ENCODE measurements at regions of chr3 and their contacts with region 1.

Region 1: DNA sequence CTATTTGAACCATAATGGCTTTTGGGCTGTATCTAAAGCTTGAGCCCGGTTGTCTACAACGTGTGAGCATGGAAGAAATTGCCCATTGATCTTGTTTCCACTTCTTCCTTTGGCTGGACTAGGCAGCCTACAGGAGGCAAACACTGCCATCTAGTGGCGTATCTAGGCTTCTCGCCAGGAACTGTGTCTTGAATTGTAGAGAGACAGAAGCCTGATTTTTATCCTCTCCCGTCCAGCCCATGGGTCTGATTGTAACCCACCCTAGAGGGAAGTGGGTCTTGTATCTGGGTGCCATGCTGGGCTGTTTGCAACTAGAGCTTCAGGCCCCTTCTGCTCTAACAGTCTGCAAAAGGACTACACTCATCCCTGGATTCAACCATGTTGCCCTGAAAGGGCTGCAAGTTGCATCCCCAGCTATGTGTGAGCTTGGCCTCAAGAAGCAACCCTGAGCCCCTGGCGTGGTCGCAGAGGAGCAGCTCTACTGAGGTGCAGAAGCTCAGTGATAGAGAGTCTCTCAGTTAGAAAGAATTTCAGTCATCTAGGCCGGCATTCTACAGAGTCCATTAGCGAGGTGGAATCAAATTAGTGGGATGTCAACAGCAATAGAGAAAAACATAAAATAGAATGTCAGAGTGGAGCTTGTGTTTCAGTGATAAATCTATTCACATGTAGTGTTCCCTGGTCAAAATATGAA is 170.2 kb upstream of the UMPS start:
- DNase-seq: no peak
- ATAC-seq: peak; percentile 95
- H3K4me3 ChIP-seq: no peak overlapping the region
- H3K27ac ChIP-seq: no peak overlapping the region
- H3K4me1 ChIP-seq: no peaks in the 10 kb centered on the region
- H3K27me3 ChIP-seq: 0 out of 4 replicates have a peak, but pooled peaks cover 0 to 2% of the 10 kb centered on the region in 2 experiments
- CTCF ChIP-seq: peak; percentile 87 to 90 (median 88)
- EP300 ChIP-seq: no peak
- POLR2A ChIP-seq: no peak
- RAD21 ChIP-seq: peak; percentile 77

Region 2: GRCh38 chr3:124351430-124352148 is 208.4 kb before region 1 on chr3:
- CTCF ChIA-PET with region 1: interaction called, 19 read pairs
- POLR2A ChIA-PET with region 1: no interaction called
- RAD21 ChIA-PET with region 1: no interaction called
- SMC1A ChIA-PET with region 1: interaction called, 4 read pairs
- in situ Hi-C with region 1: no loop called
- intact Hi-C with region 1: no loop called
- DNase-seq: no peak
- ATAC-seq: peak; percentile 45; the same call in 1 of the 3 replicates
- H3K4me3 ChIP-seq: no peak overlapping the region
- H3K27ac ChIP-seq: no peak overlapping the region
- H3K4me1 ChIP-seq: no peaks in the 10 kb centered on the region
- H3K27me3 ChIP-seq: no peaks in the 10 kb centered on the region; a peak in 1 of 4 replicates
- CTCF ChIP-seq: peak; percentile 33 to 57 (median 44); a peak in 5 of 6 replicates
- EP300 ChIP-seq: no peak
- POLR2A ChIP-seq: no peak
- RAD21 ChIP-seq: peak; percentile 87

Region 3: GRCh38 chr3:124451630-124452317 is 108.3 kb before region 1 on chr3:
- CTCF ChIA-PET with region 1: no interaction called
- POLR2A ChIA-PET with region 1: no interaction called
- RAD21 ChIA-PET with region 1: no interaction called
- SMC1A ChIA-PET with region 1: no interaction called
- in situ Hi-C with region 1: no loop called
- intact Hi-C with region 1: no loop called
- DNase-seq: peak; percentile 13
- ATAC-seq: peak; percentile 54
- H3K4me3 ChIP-seq: no peak overlapping the region
- H3K27ac ChIP-seq: no peak overlapping the region
- H3K4me1 ChIP-seq: peaks cover 3% of the 10 kb centered on the region; the same call in 1 of the 2 replicates
- H3K27me3 ChIP-seq: no peaks in the 10 kb centered on the region; a peak in 1 of 4 replicates
- CTCF ChIP-seq: no peak
- EP300 ChIP-seq: peak in 1 of 2 experiments; percentile 16; a peak in 1 of 4 replicates
- POLR2A ChIP-seq: no peak
- RAD21 ChIP-seq: no peak

Region 4: DNA sequence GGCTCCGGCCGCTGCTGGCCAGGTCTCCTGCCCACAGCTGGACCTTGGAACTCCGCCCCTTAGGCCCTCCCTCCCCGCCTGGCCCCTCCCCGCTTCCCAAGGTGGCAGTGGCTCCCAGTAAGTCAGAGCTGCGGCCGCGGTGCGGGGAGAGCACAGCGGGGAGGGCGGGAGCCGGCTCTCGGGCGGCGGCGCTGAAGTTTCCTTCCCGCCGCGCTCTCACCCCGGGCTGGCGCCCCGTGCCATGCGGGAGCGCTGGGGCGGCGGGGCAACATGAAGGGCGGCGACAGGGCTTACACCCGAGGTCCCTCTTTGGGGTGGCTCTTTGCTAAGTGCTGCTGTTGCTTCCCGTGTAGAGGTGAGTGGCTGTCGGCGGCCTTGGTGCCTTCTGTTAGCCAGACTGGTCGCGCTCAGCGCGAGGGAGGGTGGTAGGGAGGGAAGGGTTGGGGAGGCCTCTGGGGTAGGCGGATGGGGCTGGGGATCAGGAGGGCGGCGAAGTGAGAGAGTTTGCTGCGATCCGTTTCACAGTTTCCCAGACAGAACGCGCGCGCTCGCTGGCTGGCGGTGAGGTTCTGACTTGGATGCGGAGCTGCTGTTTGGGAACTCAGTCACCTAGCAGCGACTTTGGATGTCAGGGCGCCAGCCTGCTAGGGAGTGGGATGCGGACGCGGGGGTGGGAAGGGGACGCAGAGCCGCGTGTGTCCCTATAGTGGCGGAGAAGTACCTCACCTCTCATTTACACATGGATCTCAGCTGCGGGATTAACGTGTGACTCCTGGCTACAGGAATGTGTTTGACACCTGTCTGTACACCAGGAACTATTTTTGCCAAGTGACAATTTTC is 24.7 kb after region 1 on chr3:
- CTCF ChIA-PET with region 1: interaction called, 5 read pairs
- POLR2A ChIA-PET with region 1: no interaction called
- RAD21 ChIA-PET with region 1: no interaction called
- SMC1A ChIA-PET with region 1: interaction called, 19 read pairs
- in situ Hi-C with region 1: no loop called
- intact Hi-C with region 1: no loop called
- DNase-seq: no peak
- ATAC-seq: peak; percentile 73
- H3K4me3 ChIP-seq: peak overlapping the region; percentile 61; the same call in 1 of the 2 replicates
- H3K27ac ChIP-seq: no peak overlapping the region
- H3K4me1 ChIP-seq: peaks cover 7% of the 10 kb centered on the region
- H3K27me3 ChIP-seq: peaks cover 3 to 10% of the 10 kb centered on the region in 2 experiments; a peak in 2 of 4 replicates
- CTCF ChIP-seq: no peak
- EP300 ChIP-seq: no peak
- POLR2A ChIP-seq: no peak
- RAD21 ChIP-seq: no peak

Region 5: GRCh38 chr3:124639406-124640237 is 79.6 kb after region 1 on chr3:
- CTCF ChIA-PET with region 1: interaction called, 22 read pairs
- POLR2A ChIA-PET with region 1: no interaction called
- RAD21 ChIA-PET with region 1: interaction called, 11 read pairs
- SMC1A ChIA-PET with region 1: interaction called, 10 read pairs
- in situ Hi-C with region 1: no loop called
- intact Hi-C with region 1: no loop called
- DNase-seq: peak; percentile 77
- ATAC-seq: peak; percentile 81
- H3K4me3 ChIP-seq: no peak overlapping the region; the same call in 1 of the 2 replicates
- H3K27ac ChIP-seq: peak overlapping the region; percentile 40
- H3K4me1 ChIP-seq: peaks cover 23% of the 10 kb centered on the region
- H3K27me3 ChIP-seq: no peaks in the 10 kb centered on the region
- CTCF ChIP-seq: no peak
- EP300 ChIP-seq: peak in 1 of 2 experiments; percentile 47; a peak in 2 of 4 replicates
- POLR2A ChIP-seq: no peak
- RAD21 ChIP-seq: no peak

Region 6: GRCh38 chr3:124676236-124676635 is 116.2 kb after region 1 on chr3:
- CTCF ChIA-PET with region 1: interaction called, 577 read pairs
- POLR2A ChIA-PET with region 1: no interaction called
- RAD21 ChIA-PET with region 1: interaction called, 3 read pairs
- SMC1A ChIA-PET with region 1: interaction called, 13 read pairs
- in situ Hi-C with region 1: no loop called
- intact Hi-C with region 1: no loop called
- DNase-seq: no peak
- ATAC-seq: no peak
- H3K4me3 ChIP-seq: no peak overlapping the region
- H3K27ac ChIP-seq: no peak overlapping the region
- H3K4me1 ChIP-seq: no peaks in the 10 kb centered on the region
- H3K27me3 ChIP-seq: no peaks in the 10 kb centered on the region
- CTCF ChIP-seq: no peak
- EP300 ChIP-seq: no peak
- POLR2A ChIP-seq: no peak
- RAD21 ChIP-seq: no peak

Region 7: DNA sequence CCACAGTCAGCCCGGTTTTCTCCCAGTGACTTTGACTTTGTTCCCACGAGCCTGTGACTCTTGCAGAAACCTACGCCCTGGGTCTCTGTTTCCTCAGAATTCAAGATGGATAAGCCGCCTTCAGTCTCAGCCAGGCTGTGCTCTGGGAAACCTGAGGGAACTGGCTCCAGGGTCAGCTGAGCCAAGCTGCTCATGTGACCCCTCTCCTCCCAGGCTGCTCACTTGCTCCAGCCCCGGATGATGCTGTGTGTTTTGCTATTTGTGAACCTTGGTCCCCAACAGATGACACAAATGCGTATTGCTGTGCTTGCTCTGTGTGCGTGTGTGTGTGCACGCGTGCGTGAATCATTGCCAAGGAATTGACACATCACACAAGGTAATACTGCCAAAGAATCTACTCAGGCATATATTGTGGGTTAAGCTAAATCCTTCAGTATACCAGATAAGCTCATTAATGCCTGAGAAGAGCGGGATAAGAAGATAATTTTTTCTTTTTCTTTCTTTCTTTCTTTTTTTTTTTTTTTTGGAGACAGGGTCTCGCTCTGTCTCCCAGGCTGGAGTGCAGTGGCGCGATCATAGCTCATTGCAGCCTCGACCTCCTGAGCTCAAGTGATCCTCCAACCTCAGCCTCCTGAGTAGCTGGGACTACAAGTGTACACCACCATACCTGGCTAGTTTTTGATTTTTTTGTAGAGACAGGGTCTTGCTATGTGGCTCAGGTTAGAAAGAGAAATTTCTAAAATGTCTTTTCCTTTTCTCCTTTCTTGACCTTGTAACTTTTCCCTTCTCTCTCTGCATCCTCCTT is 141.1 kb after region 1 on chr3:
- CTCF ChIA-PET with region 1: interaction called, 21 read pairs
- POLR2A ChIA-PET with region 1: no interaction called
- RAD21 ChIA-PET with region 1: interaction called, 5 read pairs
- SMC1A ChIA-PET with region 1: interaction called, 4 read pairs
- in situ Hi-C with region 1: no loop called
- intact Hi-C with region 1: no loop called
- DNase-seq: no peak
- ATAC-seq: no peak
- H3K4me3 ChIP-seq: no peak overlapping the region
- H3K27ac ChIP-seq: no peak overlapping the region
- H3K4me1 ChIP-seq: no peaks in the 10 kb centered on the region
- H3K27me3 ChIP-seq: no peaks in the 10 kb centered on the region; a peak in 1 of 4 replicates
- CTCF ChIP-seq: no peak
- EP300 ChIP-seq: no peak
- POLR2A ChIP-seq: no peak
- RAD21 ChIP-seq: no peak

Region 8: DNA sequence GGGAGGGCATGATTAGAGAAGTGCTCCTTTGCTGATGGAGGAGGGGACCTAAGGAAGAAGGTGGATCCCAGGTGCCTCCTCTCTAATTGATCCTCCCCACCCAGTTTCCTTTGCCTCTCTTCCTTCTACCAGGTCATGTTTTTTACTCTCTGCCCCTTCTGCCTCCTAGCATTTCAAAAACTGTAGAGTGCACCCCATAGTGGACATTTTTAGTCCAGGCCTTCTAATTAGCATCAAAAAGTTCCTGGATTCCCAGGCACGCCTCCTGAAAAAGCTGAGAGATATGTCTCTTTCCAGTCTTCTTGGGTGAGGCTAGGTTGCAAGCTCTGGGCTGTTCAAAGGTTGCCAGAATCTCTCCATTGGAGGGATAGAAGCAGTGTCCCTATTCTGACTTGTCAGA is 345.8 kb after region 1 on chr3:
- CTCF ChIA-PET with region 1: interaction called, 8 read pairs
- POLR2A ChIA-PET with region 1: no interaction called
- RAD21 ChIA-PET with region 1: interaction called, 5 read pairs
- SMC1A ChIA-PET with region 1: interaction called, 3 read pairs
- in situ Hi-C with region 1: loop called (anchors 5 kb)
- intact Hi-C with region 1: no loop called
- DNase-seq: no peak
- ATAC-seq: no peak
- H3K4me3 ChIP-seq: no peak overlapping the region
- H3K27ac ChIP-seq: no peak overlapping the region
- H3K4me1 ChIP-seq: no peaks in the 10 kb centered on the region
- H3K27me3 ChIP-seq: no peaks in the 10 kb centered on the region; a peak in 2 of 4 replicates
- CTCF ChIP-seq: no peak
- EP300 ChIP-seq: no peak
- POLR2A ChIP-seq: no peak
- RAD21 ChIP-seq: no peak